Activated T-helper 1 cell treated with anti-CD3 and anti-CD28 coated beads, Interleukin-12 subunit alpha, Interleukin-12 subunit beta, Interleukin-2, Interleukin-4 antibody, amounts not matched to agents 30 ng/mL and 10 ng/mL and 1 ng/mL, durations not matched to agents 14 hours and 24 hours and 36 hours (primary cell): ENCODE measurements at regions of chr17 and their contacts with region 1.

Region 1: DNA sequence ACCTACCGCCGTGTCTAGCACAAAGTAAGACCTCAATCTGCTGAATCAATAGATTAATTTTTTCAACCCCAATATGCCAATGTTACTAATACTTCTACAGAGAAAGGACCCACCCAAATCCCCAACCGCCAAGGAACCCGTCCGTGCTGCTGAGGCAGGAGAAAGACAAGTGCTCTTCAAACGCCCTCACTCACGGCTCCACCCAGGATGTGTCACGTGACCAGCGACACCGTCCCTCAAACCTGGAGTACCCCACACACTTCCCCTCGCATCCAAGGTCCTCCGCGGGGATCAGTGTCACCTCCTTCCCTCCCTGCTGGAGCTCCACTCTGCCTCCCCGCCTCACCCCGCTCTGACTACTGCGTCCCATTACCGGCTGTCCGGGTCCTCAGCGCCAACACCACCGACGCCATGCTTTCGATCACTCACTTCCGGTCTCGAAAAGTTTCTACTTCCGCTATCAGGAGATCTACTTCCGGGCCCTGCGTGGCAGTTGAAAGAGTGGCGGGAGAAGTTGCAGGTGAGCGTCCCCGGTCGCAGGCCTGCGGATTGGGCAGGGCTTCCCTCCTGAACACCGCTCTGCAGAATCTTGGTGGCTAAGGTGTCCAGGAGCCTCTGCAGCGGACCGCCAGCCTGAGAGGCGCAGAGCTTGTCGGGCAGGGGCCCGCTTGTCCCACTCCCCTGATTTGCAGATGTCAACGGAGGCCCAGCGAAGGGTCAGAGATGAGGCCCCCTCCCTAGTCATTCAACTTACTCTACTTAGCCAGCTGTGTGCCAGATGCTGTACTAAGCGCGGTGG is at the starts of genes EME1 and MRPL27:
- DNase-seq: peak; percentile 83
- H3K4me3 Mint-ChIP-seq: peak within 1 kb of the TSS; percentile 98
- H3K27ac Mint-ChIP-seq: peak within 1 kb of the TSS; percentile 100
- H3K4me1 Mint-ChIP-seq: peaks cover 33% of the 10 kb centered on the region
- H3K27me3 Mint-ChIP-seq: no peaks in the 10 kb centered on the region
- total RNA-seq, gene EME1: 27.7 and 32.9 TPM in 2 replicates
- total RNA-seq, gene MRPL27: 73.4 and 78.7 TPM in 2 replicates

Region 2: DNA sequence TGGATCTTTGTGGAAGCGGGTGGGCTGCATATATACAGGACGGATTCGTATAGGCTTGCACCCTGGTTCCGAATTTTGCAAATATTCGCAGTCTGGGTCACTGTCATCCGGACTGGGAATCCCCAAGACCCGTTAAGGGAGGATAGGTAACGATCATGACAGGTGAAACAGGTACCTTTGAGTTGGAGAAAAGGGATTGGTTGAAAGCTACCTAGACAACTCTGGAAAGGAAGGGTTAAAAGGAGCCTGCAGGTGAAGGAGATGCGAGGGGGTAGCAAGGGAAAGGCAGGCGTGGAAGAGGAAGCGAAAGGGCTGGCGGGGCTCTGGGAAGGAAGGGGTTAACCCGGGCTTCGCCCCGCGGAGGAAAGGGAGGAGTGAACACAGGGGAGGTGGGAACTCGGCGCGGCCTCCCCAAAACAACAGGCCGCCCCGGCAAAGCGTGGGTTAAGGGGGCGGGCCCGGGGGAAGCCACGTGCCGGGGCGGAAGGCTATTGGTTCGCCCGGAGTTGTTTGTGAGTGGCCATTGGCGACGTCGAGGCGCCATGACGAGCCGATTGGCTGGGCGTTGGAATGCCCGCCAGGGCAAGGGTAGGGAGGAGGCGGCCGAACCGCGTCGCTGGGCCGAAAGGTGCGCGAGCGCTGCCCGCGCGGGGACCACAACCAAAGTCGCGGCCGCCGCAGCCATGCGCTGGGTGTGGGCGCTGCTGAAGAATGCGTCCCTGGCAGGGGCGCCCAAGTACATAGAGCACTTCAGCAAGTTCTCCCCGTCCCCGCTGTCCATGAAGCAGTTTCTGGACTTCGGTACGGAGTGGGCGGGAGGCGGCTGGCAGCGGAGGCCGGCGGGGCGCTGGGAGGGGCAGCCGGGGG is 278.0 kb before region 1 on chr17 and contains the start of gene PDK2:
- intact Hi-C with region 1: no loop called
- DNase-seq: peak; percentile 97
- H3K4me3 Mint-ChIP-seq: peak within 1 kb of the TSS; percentile 85
- H3K27ac Mint-ChIP-seq: peak within 1 kb of the TSS; percentile 88
- H3K4me1 Mint-ChIP-seq: peaks cover 23% of the 10 kb centered on the region
- H3K27me3 Mint-ChIP-seq: peaks cover 2% of the 10 kb centered on the region
- total RNA-seq, gene PDK2: 13.7 and 16.9 TPM in 2 replicates

Region 3: GRCh38 chr17:50200457-50201275 is 172.3 kb before region 1 on chr17:
- intact Hi-C with region 1: no loop called
- DNase-seq: peak; percentile 74
- H3K4me3 Mint-ChIP-seq: peak overlapping the region; percentile 77
- H3K27ac Mint-ChIP-seq: peak overlapping the region; percentile 79
- H3K4me1 Mint-ChIP-seq: peaks cover 17% of the 10 kb centered on the region
- H3K27me3 Mint-ChIP-seq: peaks cover 70% of the 10 kb centered on the region

Region 4: DNA sequence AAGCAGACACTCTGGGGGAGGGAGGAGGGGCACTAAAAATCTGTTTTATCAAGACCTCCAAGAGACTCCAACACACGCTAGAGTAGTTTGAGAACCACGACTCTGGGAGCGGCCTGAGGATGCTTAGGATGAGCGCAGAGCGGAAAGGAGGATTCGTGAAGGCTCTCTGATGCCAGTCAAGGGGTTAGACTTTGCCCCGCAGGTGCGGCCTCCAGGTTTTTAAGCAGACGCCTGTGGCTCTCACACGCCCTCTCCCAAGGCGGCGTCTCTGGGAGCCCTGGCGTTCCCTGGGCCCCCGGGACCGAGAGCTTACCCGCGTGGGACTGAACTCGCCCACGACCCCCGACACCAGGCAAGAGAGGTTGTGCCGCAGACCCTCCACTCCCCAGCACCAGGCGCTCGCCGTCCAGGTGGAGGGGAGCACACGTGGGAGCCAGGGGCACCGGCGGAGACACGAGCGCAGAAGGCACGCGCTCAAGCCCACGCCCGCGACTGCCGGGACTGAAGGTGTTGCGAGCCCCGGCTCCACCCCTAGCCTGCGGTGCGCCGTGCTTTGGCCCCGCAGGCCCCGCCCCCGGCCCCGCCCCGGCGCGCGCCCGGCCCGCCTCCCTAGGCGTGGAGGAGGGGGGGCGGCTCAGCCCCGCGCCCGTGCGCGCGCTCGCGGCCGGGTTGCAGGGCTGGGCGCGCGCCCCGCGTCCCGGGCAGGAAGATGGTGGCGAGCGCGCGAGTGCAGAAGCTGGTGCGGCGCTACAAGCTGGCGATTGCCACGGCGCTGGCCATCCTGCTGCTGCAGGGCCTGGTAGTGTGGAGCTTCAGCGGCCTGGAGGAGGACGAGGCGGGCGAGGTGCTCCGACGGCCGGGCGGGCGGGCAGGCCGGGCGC is 27.3 kb before region 1 on chr17 and contains the start of gene XYLT2:
- intact Hi-C with region 1: loop called (anchors 1 kb)
- DNase-seq: peak; percentile 87
- H3K4me3 Mint-ChIP-seq: peak within 1 kb of the TSS; percentile 94
- H3K27ac Mint-ChIP-seq: peak within 1 kb of the TSS; percentile 95
- H3K4me1 Mint-ChIP-seq: peaks cover 39% of the 10 kb centered on the region
- H3K27me3 Mint-ChIP-seq: peaks cover 4% of the 10 kb centered on the region
- total RNA-seq, gene XYLT2: 63.0 and 63.9 TPM in 2 replicates

Region 5: GRCh38 chr17:50361561-50362480 is 11.1 kb before region 1 on chr17:
- intact Hi-C with region 1: loop called (anchors 1 kb)
- DNase-seq: peak; percentile 34
- H3K4me3 Mint-ChIP-seq: peak overlapping the region; percentile 3
- H3K27ac Mint-ChIP-seq: peak overlapping the region; percentile 86
- H3K4me1 Mint-ChIP-seq: peaks cover 9% of the 10 kb centered on the region
- H3K27me3 Mint-ChIP-seq: no peaks in the 10 kb centered on the region

Region 6: GRCh38 chr17:50425682-50426471 is 52.9 kb after region 1 on chr17 and contains the start of gene ACSF2:
- intact Hi-C with region 1: loop called (anchors 2 kb)
- DNase-seq: peak; percentile 66
- H3K4me3 Mint-ChIP-seq: peak within 1 kb of the TSS; percentile 91
- H3K27ac Mint-ChIP-seq: peak within 1 kb of the TSS; percentile 72
- H3K4me1 Mint-ChIP-seq: peaks cover 35% of the 10 kb centered on the region
- H3K27me3 Mint-ChIP-seq: no peaks in the 10 kb centered on the region
- total RNA-seq, gene ACSF2: 8.8 and 11.3 TPM in 2 replicates